ENCODE measurements at regions of chr1 and their contacts with region 1.

Region 1: GRCh38 chr1:45686317-45687013 is at the start of gene GPBP1L1:
- DNase-seq: peak; percentile 97
- H3K4me3 ChIP-seq: peak within 1 kb of the TSS; percentile 94
- H3K27ac ChIP-seq: peak within 1 kb of the TSS; percentile 91
- H3K4me1 ChIP-seq: peaks cover 37% of the 10 kb centered on the region
- CTCF ChIP-seq: no peak
- total RNA-seq, gene GPBP1L1: 89.7 and 101 TPM in 2 replicates

Region 2: GRCh38 chr1:45339789-45340570 is 346.5 kb before region 1 on chr1 and contains the starts of genes MUTYH and TOE1:
- CTCF ChIA-PET with region 1: no interaction called
- POLR2A ChIA-PET with region 1: interaction called, 3 read pairs
- intact Hi-C with region 1: loop called (anchors 1 kb)
- DNase-seq: peak; percentile 95
- H3K4me3 ChIP-seq: peak within 1 kb of the TSS; percentile 81
- H3K27ac ChIP-seq: peak within 1 kb of the TSS; percentile 85
- H3K4me1 ChIP-seq: peaks cover 28% of the 10 kb centered on the region
- CTCF ChIP-seq: no peak
- total RNA-seq, gene MUTYH: 46.6 and 52.6 TPM in 2 replicates
- total RNA-seq, gene TOE1: 23.7 and 30.2 TPM in 2 replicates

Region 3: DNA sequence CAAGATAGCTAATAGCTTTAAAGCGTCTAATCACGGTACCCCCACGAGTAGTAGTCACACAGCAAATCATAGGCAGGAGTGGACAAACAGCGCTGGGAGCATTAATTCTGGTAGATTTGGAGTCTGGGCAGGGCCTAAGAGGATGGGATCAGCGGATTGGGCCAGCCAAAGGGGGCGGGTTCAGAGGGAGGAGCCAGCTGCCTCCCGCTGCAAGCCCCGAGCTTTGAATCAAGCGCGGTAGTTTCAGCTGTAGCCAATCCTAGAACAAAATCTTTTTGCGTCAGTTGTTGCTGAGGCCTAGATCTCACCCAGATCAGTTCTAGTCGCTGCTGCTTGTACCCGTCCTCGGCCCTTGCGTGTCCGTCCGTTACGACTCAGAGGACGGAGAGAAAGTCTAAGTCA is 103.2 kb before region 1 on chr1:
- CTCF ChIA-PET with region 1: no interaction called
- POLR2A ChIA-PET with region 1: interaction called, 5 read pairs
- intact Hi-C with region 1: loop called (anchors 1 kb)
- DNase-seq: peak; percentile 98
- H3K4me3 ChIP-seq: peak overlapping the region; percentile 99
- H3K27ac ChIP-seq: peak overlapping the region; percentile 83
- H3K4me1 ChIP-seq: peaks cover 54% of the 10 kb centered on the region
- CTCF ChIP-seq: no peak

Region 4: GRCh38 chr1:45750298-45751038 is 64.0 kb after region 1 on chr1 and contains the start of gene IPP:
- CTCF ChIA-PET with region 1: no interaction called
- POLR2A ChIA-PET with region 1: interaction called, 3 read pairs
- intact Hi-C with region 1: loop called (anchors 1 kb)
- DNase-seq: peak; percentile 98
- H3K4me3 ChIP-seq: peak within 1 kb of the TSS; percentile 73
- H3K27ac ChIP-seq: peak within 1 kb of the TSS; percentile 81
- H3K4me1 ChIP-seq: peaks cover 13% of the 10 kb centered on the region
- CTCF ChIP-seq: peak; percentile 39; the same call in 1 of the 2 replicates
- total RNA-seq, gene IPP: 4.6 and 6.3 TPM in 2 replicates

Region 5: DNA sequence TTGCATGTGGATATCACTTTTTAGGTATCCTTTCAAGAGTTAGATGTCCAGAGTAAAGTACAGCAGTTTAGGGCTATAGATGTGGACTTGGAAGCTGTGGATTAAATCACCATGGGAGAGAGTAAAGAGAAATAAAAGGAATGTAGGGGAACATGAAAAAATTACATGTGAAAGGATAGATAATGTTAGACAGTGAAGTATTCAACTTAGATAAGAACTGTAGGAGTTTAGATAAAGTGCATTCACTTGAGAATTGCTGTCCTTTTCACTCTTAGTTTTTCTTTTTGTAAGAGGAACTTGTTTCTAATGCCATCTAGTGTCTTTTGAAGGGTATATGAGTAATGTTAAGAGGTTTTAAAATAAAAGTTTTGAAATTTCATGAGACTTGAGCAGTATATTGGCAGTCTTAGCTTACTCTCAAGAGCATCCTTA is 157.0 kb after region 1 on chr1:
- CTCF ChIA-PET with region 1: no interaction called
- POLR2A ChIA-PET with region 1: interaction called, 13 read pairs
- intact Hi-C with region 1: loop called (anchors 1 kb)
- DNase-seq: peak; percentile 61
- H3K4me3 ChIP-seq: peak overlapping the region; percentile 8
- H3K27ac ChIP-seq: peak overlapping the region; percentile 96
- H3K4me1 ChIP-seq: peaks cover 61% of the 10 kb centered on the region
- CTCF ChIP-seq: peak; percentile 87

Region 6: GRCh38 chr1:46247436-46248121 is 561.1 kb after region 1 on chr1 and contains the start of gene RAD54L:
- CTCF ChIA-PET with region 1: no interaction called
- POLR2A ChIA-PET with region 1: no interaction called
- intact Hi-C with region 1: loop called (anchors 5 kb)
- DNase-seq: peak; percentile 100
- H3K4me3 ChIP-seq: peak within 1 kb of the TSS; percentile 86
- H3K27ac ChIP-seq: peak within 1 kb of the TSS; percentile 71
- H3K4me1 ChIP-seq: peaks cover 32% of the 10 kb centered on the region
- CTCF ChIP-seq: no peak
- total RNA-seq, gene RAD54L: 53.3 and 62.6 TPM in 2 replicates

Measured in OCI-LY7 (cell line).